Activated T-helper 2 cell treated with anti-CD3 and anti-CD28 coated beads, Interferon-gamma antibody, Interleukin-2, Interleukin-4, amounts not matched to agents 10 μg/mL and 5 μg/mL and 100 μg/mL, durations not matched to agents 14 hours and 24 hours and 36 hours (primary cell): ENCODE measurements at regions of chr1 and their contacts with region 1.

Region 1: DNA sequence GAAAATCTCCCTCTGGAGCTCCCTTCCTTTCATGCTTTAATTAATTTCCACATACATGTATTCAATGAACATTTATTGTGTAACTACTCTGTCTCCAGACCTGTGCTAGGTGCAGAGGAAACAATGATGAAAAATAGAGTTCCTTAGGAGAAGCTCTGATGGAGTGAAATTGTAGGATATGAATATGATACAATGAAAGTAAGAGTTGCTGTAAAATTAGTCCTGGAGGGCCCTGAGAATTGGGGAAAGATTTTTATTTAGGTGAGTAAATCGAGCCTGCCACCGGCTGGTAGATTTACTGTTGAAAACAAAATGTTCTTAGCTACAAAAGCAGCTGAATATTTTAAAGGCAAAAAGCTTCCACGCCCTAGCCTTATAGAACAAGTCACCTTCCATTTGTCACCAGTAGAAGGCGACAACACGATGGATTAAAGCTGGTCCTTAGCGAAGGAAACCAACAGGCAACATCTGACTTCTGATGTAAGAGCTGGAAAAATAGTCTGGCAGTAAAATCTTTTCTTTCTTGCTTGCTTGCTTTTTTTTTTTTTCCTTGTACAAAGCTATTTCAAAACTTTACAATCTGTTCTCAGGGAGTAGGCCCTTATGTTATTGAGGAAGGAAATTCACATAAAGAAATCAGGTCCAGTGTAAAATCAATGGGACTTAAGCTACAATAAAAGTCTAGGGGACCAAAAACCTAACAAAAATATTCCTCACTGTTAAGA is 82.0 kb upstream of the ROR1 start:
- DNase-seq: peak; percentile 13
- H3K4me3 Mint-ChIP-seq: no peak overlapping the region
- H3K27ac Mint-ChIP-seq: no peak overlapping the region
- H3K4me1 Mint-ChIP-seq: peaks cover 3% of the 10 kb centered on the region
- H3K27me3 Mint-ChIP-seq: peaks cover 8% of the 10 kb centered on the region

Region 2: DNA sequence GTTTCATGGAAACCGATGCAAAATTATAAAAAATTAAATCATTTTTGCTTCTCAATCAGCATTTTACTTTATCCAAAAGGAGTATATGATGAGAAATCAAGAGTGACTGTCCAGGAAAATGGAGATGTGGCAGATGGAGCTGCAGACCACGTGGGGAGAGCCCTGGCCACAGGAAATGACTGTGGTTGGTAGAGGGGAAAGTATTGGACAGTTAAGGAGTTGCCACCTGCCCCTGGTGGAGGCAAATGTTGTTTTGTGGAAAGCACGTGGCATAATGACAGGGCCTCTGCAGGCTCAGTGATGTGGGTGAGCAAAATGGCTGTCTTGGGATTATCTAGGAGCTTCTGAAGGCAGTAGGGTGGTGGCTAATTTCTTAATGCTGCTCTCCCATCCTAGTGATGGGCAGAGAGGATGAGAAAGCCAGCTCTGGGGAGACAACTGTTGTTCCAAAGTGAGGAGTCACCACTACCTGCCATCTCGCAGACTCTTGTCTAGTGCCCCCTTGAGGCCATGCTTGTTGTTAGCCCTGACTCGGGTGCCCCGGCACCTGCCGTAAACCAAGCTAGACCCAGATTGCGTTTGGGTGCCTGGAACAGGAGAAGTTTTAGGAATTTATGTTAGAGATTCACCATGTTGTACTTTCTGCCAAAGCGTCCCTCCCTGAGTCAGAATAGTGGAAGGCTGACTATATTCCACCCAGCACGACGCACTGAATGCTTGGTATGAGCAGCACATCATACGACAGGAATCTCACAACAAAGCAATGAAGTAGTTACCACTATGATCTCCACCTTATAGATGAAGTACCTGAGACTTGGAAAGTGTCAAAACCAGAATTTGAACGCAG is 225.9 kb after region 1 on chr1:
- intact Hi-C with region 1: loop called (anchors 5 kb)
- DNase-seq: no peak
- H3K4me3 Mint-ChIP-seq: no peak overlapping the region
- H3K27ac Mint-ChIP-seq: no peak overlapping the region
- H3K4me1 Mint-ChIP-seq: no peaks in the 10 kb centered on the region
- H3K27me3 Mint-ChIP-seq: peaks cover 6% of the 10 kb centered on the region

Region 3: DNA sequence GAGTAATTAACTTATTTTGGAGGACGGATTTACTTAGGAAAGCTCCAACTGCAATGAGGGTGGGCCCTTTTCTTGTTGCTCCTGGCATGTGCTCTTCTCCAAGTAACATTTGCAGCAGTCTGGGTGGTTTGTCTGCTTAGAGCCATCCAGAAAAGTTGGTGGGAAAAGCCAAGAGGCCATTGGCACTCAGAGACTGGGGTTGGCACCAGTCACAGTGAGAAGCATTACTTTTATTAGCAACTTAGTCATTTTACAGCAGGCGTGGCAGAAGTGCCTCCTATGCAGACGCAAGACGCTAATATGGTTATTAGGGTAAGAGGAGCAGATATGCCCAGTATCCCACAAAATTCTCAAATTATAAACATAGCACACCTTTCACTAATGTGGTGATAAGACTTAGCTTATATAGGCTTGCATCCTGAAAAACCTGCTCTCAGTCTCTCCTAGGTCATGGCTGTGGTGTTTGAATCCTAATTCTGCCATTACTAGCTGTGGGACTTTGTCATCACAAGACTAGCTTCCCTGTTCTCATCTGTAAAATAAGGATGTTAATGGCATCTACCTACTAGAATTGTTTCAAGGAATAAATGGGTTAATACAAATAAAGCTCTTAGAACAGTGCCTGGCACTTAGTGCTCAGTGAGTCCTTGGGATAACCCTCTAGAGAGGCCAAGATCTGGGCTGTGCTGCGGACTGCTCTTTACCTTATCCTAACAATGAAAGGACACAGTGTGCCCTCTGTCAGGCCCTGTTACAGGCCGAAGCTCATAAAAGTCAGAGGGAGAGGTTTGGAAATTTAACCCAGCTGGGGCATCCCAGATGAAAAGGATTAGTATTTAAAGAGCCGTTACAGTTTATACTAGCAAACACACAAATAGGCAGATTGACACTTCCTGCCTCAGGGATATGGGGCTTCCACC is 236.6 kb after region 1 on chr1:
- intact Hi-C with region 1: no loop called
- DNase-seq: no peak
- H3K4me3 Mint-ChIP-seq: no peak overlapping the region
- H3K27ac Mint-ChIP-seq: no peak overlapping the region
- H3K4me1 Mint-ChIP-seq: no peaks in the 10 kb centered on the region
- H3K27me3 Mint-ChIP-seq: no peaks in the 10 kb centered on the region

Region 4: DNA sequence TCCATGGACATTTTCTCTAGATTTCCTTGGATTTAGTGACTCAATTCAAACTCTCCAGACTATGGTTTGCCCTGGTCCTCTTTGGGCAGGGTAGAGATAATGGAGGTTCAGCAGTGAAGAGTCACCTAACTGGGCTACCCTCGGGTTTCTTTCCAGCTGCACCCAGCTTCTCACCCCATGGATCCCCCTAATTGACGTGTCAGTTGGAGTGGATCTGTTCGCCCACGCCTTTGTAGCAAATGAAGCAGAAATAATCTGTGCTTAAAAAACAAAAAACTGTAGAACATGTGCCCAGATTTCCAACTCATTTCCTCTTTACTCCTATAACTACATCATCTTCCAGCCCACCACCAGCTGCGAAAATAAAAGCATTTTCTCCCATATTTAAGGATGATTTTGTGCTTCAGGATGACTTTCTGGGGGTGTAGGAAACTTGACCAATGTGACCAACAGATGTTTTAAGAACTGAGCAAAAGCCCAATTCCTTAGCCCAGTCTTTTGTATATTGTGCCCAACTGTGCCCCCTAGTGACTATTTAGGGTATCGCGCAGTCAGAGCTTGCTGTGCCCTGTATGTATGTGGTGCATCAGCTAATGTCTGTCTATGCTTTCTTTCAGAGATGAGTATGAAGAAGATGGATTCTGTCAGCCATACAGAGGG is 445.0 kb after region 1 on chr1:
- intact Hi-C with region 1: loop called (anchors 5 kb)
- DNase-seq: peak; percentile 47
- H3K4me3 Mint-ChIP-seq: no peak overlapping the region
- H3K27ac Mint-ChIP-seq: no peak overlapping the region
- H3K4me1 Mint-ChIP-seq: peaks cover 1% of the 10 kb centered on the region
- H3K27me3 Mint-ChIP-seq: peaks cover 9% of the 10 kb centered on the region